ENCODE measurements at regions of chr15 and their contacts with region 1.

Region 1: GRCh38 chr15:93644595-93644994 is 555.6 kb upstream of the RGMA start:
- DNase-seq: no peak
- H3K4me3 ChIP-seq: no peak overlapping the region
- H3K27ac ChIP-seq: no peak overlapping the region
- H3K4me1 ChIP-seq: no peaks in the 10 kb centered on the region
- H3K27me3 ChIP-seq: no peaks in the 10 kb centered on the region
- CTCF ChIP-seq: no peak
- POLR2A ChIP-seq: no peak

Region 2: DNA sequence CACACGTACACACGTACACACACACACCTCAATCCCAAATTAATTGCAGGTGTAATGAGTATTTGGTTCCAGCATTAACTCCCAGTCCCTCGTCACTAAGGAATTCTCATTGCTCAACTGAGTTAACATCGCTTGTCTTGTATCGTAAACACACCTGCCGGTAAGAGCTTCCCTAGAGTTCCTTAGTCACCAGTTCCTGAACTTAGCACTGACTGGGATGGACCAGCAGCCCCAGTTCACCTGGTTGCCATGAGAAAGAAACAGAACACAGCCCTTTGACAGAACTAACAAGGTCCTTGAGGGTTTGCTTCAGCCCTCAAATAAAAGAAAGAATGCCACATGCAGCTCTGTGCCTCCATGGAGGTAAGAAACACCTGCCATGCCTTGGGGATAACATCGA is 1857.4 kb before region 1 on chr15:
- intact Hi-C with region 1: loop called (anchors 5 kb)
- DNase-seq: no peak
- H3K4me3 ChIP-seq: no peak overlapping the region
- H3K27ac ChIP-seq: no peak overlapping the region
- H3K4me1 ChIP-seq: no peaks in the 10 kb centered on the region
- H3K27me3 ChIP-seq: no peaks in the 10 kb centered on the region
- CTCF ChIP-seq: no peak
- POLR2A ChIP-seq: no peak